CD4-positive, alpha-beta memory T cell (primary cell): ENCODE measurements at regions of chr3 and their contacts with region 1.

Region 1: GRCh38 chr3:184314363-184314699 is at the start of gene EIF4G1:
- DNase-seq: peak; percentile 91 to 93 (median 93)
- H3K4me3 ChIP-seq: peak within 1 kb of the TSS; percentile 65 to 67
- H3K4me3 Mint-ChIP-seq: peak within 1 kb of the TSS; percentile 80 to 93 (median 90)
- H3K27ac ChIP-seq: peak within 1 kb of the TSS; percentile 92
- H3K27ac Mint-ChIP-seq: peak within 1 kb of the TSS; percentile 93 to 97 (median 96)
- H3K4me1 ChIP-seq: peaks cover 37% of the 10 kb centered on the region
- H3K4me1 Mint-ChIP-seq: peaks cover 25 to 42% (median 28%) of the 10 kb centered on the region in 4 donors
- H3K27me3 ChIP-seq: no peaks in the 10 kb centered on the region
- H3K27me3 Mint-ChIP-seq: no peaks in the 10 kb centered on the region
- total RNA-seq, gene EIF4G1: 236 to 246 TPM

Region 2: DNA sequence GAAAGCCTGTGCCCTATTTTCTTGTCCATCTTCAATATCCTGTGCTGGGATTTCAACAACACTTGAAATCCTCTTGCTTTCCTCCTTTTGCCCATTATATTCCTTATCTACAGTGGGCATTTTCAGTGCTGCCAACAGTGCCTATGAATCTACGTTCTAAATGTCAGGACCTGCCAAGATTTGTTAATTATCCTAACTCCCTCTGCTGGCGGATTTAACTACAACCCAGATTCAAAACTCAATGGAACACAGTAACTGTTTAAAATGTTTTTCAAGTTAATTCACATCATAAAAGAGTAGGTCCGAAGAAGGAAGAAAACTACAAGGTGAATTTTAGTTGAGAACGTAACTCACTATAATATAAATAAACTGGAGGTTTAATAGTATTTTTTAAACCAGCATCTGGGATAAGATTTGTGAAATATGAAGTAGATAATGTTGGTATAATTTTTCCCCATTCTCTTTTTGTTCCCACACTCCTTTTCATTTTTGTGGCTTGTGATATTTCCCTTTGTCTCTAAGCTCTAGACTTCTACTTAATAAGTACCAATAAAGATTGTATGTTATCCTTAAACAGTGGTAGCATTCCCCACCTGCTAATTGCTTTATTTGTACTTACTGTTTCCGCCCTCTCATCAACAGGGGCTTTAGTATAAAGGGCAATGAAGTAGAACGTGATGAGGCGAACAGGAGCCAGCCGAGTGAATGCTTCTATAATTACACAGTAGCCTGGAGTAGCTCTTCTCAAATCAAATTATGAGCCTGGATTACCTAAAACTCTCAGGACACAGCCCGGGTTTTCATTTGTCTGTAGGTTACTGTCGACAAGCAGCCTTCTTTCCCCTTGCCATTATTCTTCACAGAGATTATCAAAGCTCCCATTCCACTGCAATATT is 1823.5 kb before region 1 on chr3:
- CTCF ChIA-PET with region 1: no interaction called
- POLR2A ChIA-PET with region 1: no interaction called
- intact Hi-C with region 1: no loop called
- DNase-seq: no peak
- H3K4me3 ChIP-seq: no peak overlapping the region
- H3K4me3 Mint-ChIP-seq: no peak overlapping the region
- H3K27ac ChIP-seq: no peak overlapping the region
- H3K27ac Mint-ChIP-seq: no peak overlapping the region
- H3K4me1 ChIP-seq: no peaks in the 10 kb centered on the region
- H3K4me1 Mint-ChIP-seq: no peaks in the 10 kb centered on the region
- H3K27me3 ChIP-seq: no peaks in the 10 kb centered on the region
- H3K27me3 Mint-ChIP-seq: no peaks in the 10 kb centered on the region

Region 3: DNA sequence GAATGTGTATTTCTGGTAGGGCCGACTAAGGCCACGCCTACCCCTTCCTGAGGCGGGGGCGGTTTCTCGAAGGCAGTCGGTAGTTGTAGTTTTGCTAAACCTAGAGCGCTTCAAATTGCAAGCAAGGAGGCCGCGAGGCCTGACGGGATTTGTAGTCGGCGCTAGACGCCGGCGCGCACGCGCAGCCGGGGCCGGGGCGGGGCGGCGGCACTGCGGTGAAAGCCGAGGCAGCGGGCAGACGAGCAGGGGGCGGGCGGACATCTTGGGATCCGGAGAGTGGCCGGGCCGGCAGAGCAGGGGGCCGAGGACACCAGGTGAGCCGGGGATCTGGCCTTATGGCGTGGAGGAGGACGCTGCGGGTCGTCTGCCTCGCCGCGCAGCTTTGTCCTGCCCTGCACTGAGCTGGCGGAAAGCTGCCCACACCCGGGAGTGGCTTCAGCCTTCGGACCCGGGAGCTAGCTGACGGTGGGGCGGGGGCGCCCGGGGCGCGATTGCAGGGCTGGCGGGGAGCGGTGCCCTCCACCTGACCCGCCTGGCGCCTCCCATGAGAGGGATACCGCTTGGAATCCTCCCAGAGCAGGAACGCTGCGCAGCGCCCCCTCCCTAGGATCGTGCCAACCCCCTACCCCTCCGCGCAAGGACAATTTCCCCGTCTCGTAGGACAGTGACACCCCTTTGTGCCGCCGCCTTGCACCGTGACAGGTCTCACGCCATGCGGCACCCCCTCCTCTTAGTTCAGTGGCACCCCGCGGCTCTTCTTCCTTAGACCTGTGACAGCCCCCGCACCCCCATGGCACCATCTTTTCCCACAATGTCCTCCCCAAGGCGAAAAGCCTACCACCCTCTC is 139.5 kb before region 1 on chr3 and contains the start of gene AP2M1:
- CTCF ChIA-PET with region 1: no interaction called
- POLR2A ChIA-PET with region 1: no interaction called
- intact Hi-C with region 1: loop called (anchors 1 kb)
- DNase-seq: peak; percentile 98 to 99 (median 99)
- H3K4me3 ChIP-seq: peak within 1 kb of the TSS; percentile 68 to 90
- H3K4me3 Mint-ChIP-seq: peak within 1 kb of the TSS; percentile 90 to 98 (median 96)
- H3K27ac ChIP-seq: peak within 1 kb of the TSS; percentile 88
- H3K27ac Mint-ChIP-seq: peak within 1 kb of the TSS; percentile 88 to 95 (median 92)
- H3K4me1 ChIP-seq: peaks cover 37% of the 10 kb centered on the region
- H3K4me1 Mint-ChIP-seq: peaks cover 17 to 43% (median 30%) of the 10 kb centered on the region in 4 donors
- H3K27me3 ChIP-seq: no peaks in the 10 kb centered on the region
- H3K27me3 Mint-ChIP-seq: no peaks in the 10 kb centered on the region
- total RNA-seq, gene AP2M1: 206 to 208 TPM

Region 4: DNA sequence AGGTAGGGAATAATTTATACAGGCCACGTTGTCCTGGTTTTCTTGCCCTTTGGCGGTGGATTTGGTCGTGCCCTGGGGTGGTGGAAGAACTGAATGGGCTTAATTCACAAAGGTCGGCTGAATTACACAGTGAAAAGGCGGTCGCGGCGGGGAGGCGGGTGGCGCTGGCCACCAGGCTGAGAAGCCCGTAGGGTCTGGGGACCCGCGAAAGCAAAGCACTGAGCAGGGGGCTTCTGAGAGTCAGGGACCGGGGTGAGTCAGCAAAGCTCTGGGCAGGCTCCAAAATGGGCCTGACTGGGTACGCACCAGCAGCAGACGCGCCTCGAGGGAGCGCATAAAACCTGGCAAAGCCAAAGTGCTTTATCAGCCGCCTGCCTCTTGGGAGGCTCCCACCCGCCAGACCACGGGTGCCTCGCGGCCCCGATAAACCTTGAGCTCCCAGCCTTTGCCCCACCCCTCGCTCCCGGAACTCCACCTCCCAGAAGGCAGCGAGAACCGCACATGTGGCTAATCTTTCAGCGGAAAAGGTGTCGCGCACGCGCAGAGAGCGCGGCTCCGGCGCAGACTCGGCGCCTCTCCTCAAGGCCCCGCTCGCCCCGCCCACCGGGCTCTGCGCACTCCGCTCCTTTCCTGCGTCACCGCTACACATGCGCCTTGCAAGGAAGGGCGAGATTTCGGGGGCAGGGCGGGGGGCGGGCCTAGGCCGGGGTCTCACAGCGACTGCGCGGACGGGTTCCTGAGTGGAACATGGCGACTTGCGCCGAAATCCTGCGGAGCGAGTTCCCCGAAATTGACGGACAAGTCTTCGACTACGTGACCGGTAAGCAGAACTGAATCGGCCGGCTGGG is 128.6 kb before region 1 on chr3 and contains the start of gene ABCF3:
- CTCF ChIA-PET with region 1: no interaction called
- POLR2A ChIA-PET with region 1: no interaction called
- intact Hi-C with region 1: loop called (anchors 1 kb)
- DNase-seq: peak; percentile 98 to 100 (median 99)
- H3K4me3 ChIP-seq: peak within 1 kb of the TSS; percentile 87 to 98
- H3K4me3 Mint-ChIP-seq: peak within 1 kb of the TSS; percentile 98 to 99 (median 98)
- H3K27ac ChIP-seq: peak within 1 kb of the TSS; percentile 80
- H3K27ac Mint-ChIP-seq: peak within 1 kb of the TSS; percentile 92 to 99 (median 97)
- H3K4me1 ChIP-seq: peaks cover 30% of the 10 kb centered on the region
- H3K4me1 Mint-ChIP-seq: peaks cover 26 to 47% (median 36%) of the 10 kb centered on the region in 4 donors
- H3K27me3 ChIP-seq: no peaks in the 10 kb centered on the region
- H3K27me3 Mint-ChIP-seq: no peaks in the 10 kb centered on the region
- total RNA-seq, gene ABCF3: 122 to 124 TPM

Region 5: GRCh38 chr3:184325715-184326369 is 11.5 kb after region 1 on chr3:
- CTCF ChIA-PET with region 1: no interaction called
- POLR2A ChIA-PET with region 1: interaction called, 19 read pairs
- intact Hi-C with region 1: no loop called
- DNase-seq: no peak
- H3K4me3 ChIP-seq: no peak overlapping the region
- H3K4me3 Mint-ChIP-seq: no peak overlapping the region
- H3K27ac ChIP-seq: no peak overlapping the region
- H3K27ac Mint-ChIP-seq: peak overlapping the region in 2 of 7 donors; percentile 17 to 51
- H3K4me1 ChIP-seq: no peaks in the 10 kb centered on the region
- H3K4me1 Mint-ChIP-seq: peaks cover 0 to 5% (median under 1%) of the 10 kb centered on the region in 4 donors
- H3K27me3 ChIP-seq: no peaks in the 10 kb centered on the region
- H3K27me3 Mint-ChIP-seq: no peaks in the 10 kb centered on the region

Region 6: DNA sequence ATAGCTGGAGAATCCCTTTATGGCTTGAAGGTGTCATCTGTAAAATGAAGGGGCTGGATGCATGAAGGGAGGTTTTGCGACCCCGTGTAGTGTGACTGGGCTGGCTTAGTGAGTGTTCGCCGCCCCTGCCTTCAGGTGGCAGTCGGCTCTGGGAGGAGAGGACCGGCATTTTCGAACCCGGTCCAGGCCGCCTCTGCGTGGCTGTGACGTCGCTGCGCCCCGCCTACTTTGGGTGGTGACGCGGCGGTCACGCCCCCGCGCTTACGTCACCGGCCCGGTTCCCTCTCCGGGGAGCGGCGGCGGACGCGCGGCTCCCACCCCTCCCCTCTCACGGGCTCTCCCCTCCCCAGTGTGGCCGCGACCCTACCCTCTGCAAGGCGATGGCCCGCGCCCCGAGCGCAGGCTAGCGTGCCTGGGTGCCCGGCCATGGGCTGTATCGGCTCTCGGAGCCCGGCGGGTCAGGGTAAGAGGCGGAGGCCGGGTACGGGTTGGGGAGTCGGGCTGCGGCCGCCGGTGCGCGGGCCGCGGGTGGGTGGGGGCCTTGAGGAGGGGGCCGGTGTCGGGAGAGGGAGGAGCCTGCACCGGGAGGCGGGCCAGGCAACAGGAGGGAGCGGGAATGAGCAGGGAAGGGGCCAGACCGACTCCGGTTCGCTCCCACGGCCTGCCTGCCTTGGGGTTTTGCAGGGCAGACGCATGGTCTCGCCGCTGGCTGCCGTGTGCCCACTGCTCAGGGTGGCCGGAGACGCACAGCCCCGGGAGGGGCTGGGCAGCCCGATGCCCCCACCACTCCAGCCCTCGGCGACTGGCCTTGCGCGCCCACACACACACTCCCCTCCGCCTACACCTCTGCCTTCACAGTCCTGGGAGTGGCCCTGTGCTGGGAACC is 21.6 kb after region 1 on chr3:
- CTCF ChIA-PET with region 1: no interaction called
- POLR2A ChIA-PET with region 1: interaction called, 3 read pairs
- intact Hi-C with region 1: loop called (anchors 1 kb)
- DNase-seq: peak; percentile 84 to 89 (median 87)
- H3K4me3 ChIP-seq: peak overlapping the region; percentile 53 to 69
- H3K4me3 Mint-ChIP-seq: peak overlapping the region; percentile 87 to 92 (median 90)
- H3K27ac ChIP-seq: peak overlapping the region; percentile 92
- H3K27ac Mint-ChIP-seq: peak overlapping the region; percentile 94 to 99 (median 98)
- H3K4me1 ChIP-seq: peaks cover 20% of the 10 kb centered on the region
- H3K4me1 Mint-ChIP-seq: peaks cover 23 to 47% (median 30%) of the 10 kb centered on the region in 4 donors
- H3K27me3 ChIP-seq: no peaks in the 10 kb centered on the region
- H3K27me3 Mint-ChIP-seq: no peaks in the 10 kb centered on the region

Region 7: DNA sequence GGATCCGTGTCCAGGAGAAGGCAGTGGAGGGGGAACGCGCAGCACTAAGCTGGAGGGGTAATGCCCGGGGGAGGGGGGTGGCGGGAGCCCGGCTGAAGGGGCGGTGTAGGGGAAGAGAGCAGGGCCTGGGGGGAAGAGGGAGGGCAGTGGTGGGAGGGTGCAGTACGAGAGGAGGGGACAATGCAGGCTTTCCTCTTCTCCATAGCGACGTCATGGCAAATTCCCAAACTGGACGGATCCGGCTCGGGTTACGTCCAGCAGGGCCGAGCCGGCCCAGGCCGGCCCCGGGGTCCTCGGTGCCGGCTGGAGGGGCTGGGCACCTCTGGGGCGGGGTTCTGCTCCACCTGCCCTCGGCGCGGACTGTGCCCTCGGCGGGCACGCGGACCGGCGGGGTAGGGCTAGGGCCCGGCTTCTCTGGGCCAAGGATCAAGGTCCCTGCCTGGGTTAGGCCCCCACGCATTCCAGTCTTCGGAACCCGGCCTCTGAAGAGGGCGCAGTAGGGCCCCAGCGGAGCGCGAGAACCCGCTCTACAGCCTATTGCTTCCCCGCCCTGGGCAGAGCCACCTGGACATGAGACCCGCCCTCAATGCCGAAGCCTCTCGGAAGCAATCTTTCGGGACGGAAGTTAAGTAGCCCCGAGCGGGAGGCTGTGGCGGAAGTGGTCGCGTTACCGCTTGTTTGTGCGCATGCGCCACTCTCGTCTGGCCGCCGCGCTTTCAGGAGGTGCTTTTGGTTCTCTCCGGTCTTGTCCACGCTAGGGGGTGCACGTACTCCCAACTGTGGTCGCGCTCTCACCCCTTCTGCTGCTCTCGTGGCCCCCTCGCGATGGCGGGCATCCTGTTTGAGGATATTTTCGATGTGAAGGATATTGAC is 48.6 kb after region 1 on chr3:
- CTCF ChIA-PET with region 1: no interaction called
- POLR2A ChIA-PET with region 1: interaction called, 10 read pairs
- intact Hi-C with region 1: loop called (anchors 2 kb)
- DNase-seq: peak; percentile 91 to 94 (median 92)
- H3K4me3 ChIP-seq: peak overlapping the region; percentile 81 to 92
- H3K4me3 Mint-ChIP-seq: peak overlapping the region; percentile 97 to 100 (median 99)
- H3K27ac ChIP-seq: peak overlapping the region; percentile 75
- H3K27ac Mint-ChIP-seq: peak overlapping the region; percentile 97 to 99 (median 98)
- H3K4me1 ChIP-seq: peaks cover 22% of the 10 kb centered on the region
- H3K4me1 Mint-ChIP-seq: peaks cover 16 to 42% (median 29%) of the 10 kb centered on the region in 4 donors
- H3K27me3 ChIP-seq: no peaks in the 10 kb centered on the region
- H3K27me3 Mint-ChIP-seq: no peaks in the 10 kb centered on the region